Activated CD4-positive, alpha-beta T cell treated with anti-CD3 and anti-CD28 coated beads for 36 hours (primary cell): ENCODE measurements at regions of chr2 and their contacts with region 1.

Region 1: GRCh38 chr2:237674731-237675276 is 47.4 kb downstream of the LRRFIP1 start:
- DNase-seq: peak; percentile 86
- ATAC-seq: peak; percentile 61
- H3K4me3 Mint-ChIP-seq: peak overlapping the region; percentile 74
- H3K27ac Mint-ChIP-seq: peak overlapping the region; percentile 90
- H3K4me1 Mint-ChIP-seq: peaks cover 49% of the 10 kb centered on the region
- H3K27me3 Mint-ChIP-seq: no peaks in the 10 kb centered on the region

Region 2: DNA sequence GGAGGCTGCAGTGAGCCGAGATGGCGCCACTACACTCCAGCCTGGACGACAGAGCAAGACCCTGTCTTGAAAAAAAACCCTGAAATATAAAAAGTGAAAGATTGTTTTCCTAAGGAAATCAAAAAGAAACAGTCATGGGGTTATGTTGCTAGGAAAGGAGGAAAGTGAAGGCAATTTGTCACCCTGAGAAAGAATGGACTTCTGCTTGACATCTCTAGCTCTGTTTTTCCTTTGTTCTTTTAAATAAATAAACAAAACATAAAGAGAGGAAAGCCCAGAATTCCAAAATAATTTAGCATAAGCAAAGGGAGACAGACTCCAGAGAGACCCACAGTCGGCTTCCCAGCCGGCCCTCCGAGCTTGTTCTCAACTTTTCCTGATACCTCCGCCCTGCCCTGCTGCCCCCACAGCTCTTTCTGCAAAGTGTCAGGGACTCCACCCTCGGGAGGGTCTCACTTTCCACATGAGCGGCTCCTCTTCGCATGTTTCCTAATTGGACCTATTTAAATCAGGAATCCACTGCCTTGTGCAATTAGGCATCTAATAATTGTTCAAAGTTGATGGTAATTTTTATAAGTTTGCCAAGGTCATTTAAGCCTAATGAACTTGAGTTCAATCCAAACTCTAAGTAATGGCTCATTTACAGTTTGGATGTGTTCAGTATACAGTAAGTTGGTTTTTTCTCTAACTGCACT is 638.9 kb before region 1 on chr2:
- CTCF ChIA-PET with region 1: no interaction called
- POLR2A ChIA-PET with region 1: no interaction called
- intact Hi-C with region 1: no loop called
- DNase-seq: no peak
- ATAC-seq: no peak
- H3K4me3 Mint-ChIP-seq: no peak overlapping the region
- H3K27ac Mint-ChIP-seq: no peak overlapping the region
- H3K4me1 Mint-ChIP-seq: no peaks in the 10 kb centered on the region
- H3K27me3 Mint-ChIP-seq: no peaks in the 10 kb centered on the region

Region 3: DNA sequence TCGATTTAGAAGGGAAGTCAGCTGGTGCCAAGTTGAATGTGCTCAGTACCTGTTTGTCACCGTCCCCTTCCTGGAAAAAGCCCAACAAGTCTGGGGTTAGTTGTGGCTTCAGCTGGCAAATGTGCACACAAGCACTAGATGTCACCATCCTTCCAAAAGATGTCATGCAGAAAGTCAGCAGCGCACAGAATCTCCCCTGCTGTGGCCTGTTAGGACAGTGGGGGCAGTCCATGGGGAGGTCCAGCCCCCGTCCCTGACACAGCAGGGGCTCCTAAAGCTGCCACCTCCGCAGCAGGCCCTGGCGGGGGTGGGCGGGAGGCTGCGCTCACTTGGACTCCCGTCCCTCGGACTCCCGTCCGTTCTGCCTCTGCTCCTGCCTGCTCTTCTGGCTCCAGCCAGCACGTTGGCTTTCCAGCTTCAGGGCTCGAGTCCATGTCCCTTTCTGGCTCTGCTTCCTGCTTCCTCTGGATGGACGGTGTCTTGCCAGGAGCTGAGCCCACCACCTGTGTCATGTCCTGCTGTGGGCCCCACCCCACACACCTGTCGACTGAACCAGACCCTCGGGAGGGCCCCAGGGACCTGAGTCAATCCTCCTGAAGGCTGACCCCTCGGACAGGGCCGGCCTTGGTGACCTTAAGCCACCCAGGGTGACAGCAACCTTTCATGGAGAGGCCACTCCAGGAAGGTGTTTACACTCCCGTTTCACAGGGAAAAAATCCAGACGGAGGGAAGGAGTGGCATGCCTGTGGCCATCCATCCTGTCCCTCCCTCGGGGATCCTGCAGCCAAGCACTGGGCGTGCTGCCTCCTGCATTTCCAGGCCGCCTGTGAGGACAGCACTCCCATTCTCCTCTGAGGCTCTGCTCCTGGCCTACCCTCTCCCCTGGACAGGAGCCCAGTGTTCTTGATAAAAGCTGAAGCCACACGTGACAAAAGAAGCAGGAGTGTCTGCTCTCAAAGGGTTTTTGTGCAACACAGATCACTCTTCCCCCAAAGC is 92.8 kb before region 1 on chr2:
- CTCF ChIA-PET with region 1: interaction called, 5 read pairs
- POLR2A ChIA-PET with region 1: no interaction called
- intact Hi-C with region 1: loop called in 1 of 2 experiments (anchors 1 kb)
- DNase-seq: peak; percentile 82
- ATAC-seq: peak; percentile 99
- H3K4me3 Mint-ChIP-seq: no peak overlapping the region
- H3K27ac Mint-ChIP-seq: peak overlapping the region; percentile 58
- H3K4me1 Mint-ChIP-seq: peaks cover 3% of the 10 kb centered on the region
- H3K27me3 Mint-ChIP-seq: no peaks in the 10 kb centered on the region

Region 4: DNA sequence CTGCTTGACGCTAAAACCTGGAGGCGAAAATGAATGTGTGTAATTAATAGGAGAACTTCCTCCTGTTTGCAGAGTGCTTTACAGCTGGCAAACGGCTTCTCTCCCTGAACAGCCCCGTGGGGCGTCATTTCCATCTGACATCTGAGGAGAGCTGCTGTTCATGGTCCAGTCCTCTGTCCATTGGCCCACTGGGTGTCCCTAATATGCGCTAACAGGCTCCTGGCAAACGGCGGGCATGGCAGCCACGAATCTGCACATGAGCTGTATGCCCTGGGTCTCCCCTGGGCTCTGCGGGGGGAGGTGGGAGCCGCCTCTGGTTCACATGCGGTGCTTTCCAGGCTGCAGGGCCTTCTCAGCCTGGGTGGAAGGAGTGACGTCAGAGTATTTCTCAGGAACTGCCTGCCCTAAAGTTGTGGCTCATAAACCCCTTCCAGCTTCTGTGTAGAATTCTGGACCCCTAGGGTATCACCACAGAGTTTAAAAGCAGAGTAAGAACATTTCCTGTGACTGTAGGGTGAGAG is 25.8 kb after region 1 on chr2:
- CTCF ChIA-PET with region 1: interaction called, 33 read pairs
- POLR2A ChIA-PET with region 1: interaction called, 9 read pairs
- intact Hi-C with region 1: loop called (anchors 1 kb)
- DNase-seq: peak; percentile 90
- ATAC-seq: peak; percentile 63
- H3K4me3 Mint-ChIP-seq: peak overlapping the region; percentile 70
- H3K27ac Mint-ChIP-seq: peak overlapping the region; percentile 95
- H3K4me1 Mint-ChIP-seq: peaks cover 97% of the 10 kb centered on the region
- H3K27me3 Mint-ChIP-seq: no peaks in the 10 kb centered on the region

Region 5: GRCh38 chr2:237731663-237732062 is 56.9 kb after region 1 on chr2:
- CTCF ChIA-PET with region 1: interaction called, 28 read pairs
- POLR2A ChIA-PET with region 1: interaction called, 4 read pairs
- intact Hi-C with region 1: loop called (anchors 1 to 2 kb)
- DNase-seq: peak; percentile 77
- ATAC-seq: peak; percentile 98
- H3K4me3 Mint-ChIP-seq: peak overlapping the region; percentile 43
- H3K27ac Mint-ChIP-seq: peak overlapping the region; percentile 96
- H3K4me1 Mint-ChIP-seq: peaks cover 64% of the 10 kb centered on the region
- H3K27me3 Mint-ChIP-seq: no peaks in the 10 kb centered on the region

Region 6: DNA sequence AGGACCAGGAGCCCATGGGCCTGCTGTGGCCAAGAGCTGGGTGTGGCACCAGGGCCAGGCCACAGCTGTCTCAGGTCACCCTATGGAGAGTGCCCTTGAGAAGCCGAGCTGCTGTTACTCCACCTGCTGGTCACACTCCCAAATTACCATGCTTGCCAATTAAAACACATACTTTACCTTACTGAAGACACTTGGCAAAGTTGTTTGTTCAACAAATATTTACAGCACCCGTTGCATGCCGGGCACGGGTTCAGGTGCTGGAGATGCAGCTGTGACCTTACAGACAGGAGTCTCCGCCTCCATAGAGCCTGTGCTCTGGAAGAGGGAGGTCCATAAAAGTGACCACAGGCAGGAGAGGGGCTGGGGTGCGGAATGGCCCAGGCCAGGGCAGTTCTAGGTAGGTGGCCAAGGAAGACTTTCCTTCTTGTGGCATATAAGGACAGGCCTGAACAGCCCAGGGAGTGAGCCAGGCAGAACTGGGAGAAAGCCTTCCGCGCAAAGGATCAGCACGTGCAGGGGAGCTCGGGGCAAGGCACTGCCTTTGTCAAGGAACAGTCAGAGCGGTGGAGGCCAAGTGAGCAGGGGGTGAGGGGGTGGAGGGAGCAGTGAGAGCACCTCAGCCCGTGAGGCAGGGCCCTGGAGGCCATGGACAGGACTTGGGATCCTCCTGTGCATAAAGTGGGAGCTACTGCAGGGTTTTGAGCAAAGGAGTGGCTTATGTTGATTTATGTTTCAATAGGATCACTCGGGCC is 100.2 kb after region 1 on chr2:
- CTCF ChIA-PET with region 1: interaction called, 4 read pairs
- POLR2A ChIA-PET with region 1: no interaction called
- intact Hi-C with region 1: loop called in 1 of 2 experiments (anchors 1 kb)
- DNase-seq: peak; percentile 71
- ATAC-seq: peak; percentile 85
- H3K4me3 Mint-ChIP-seq: no peak overlapping the region
- H3K27ac Mint-ChIP-seq: no peak overlapping the region
- H3K4me1 Mint-ChIP-seq: no peaks in the 10 kb centered on the region
- H3K27me3 Mint-ChIP-seq: no peaks in the 10 kb centered on the region